Body of pancreas (tissue), 4 donors: ENCODE measurements at regions of chr9 and their contacts with region 1.

Region 1: GRCh38 chr9:17635115-17635890 is 56.4 kb downstream of the SH3GL2 start:
- DNase-seq: no peak
- ATAC-seq: no peak
- H3K4me3 ChIP-seq: no peak overlapping the region
- H3K27ac ChIP-seq: no peak overlapping the region
- H3K4me1 ChIP-seq: no peaks in the 10 kb centered on the region
- H3K27me3 ChIP-seq: no peaks in the 10 kb centered on the region
- CTCF ChIP-seq: no peak
- POLR2A ChIP-seq: no peak

Region 2: GRCh38 chr9:17414986-17415385 is 220.3 kb before region 1 on chr9:
- intact Hi-C with region 1: no loop called
- DNase-seq: no peak
- ATAC-seq: no peak
- H3K4me3 ChIP-seq: no peak overlapping the region
- H3K27ac ChIP-seq: no peak overlapping the region
- H3K4me1 ChIP-seq: no peaks in the 10 kb centered on the region
- H3K27me3 ChIP-seq: no peaks in the 10 kb centered on the region
- CTCF ChIP-seq: no peak
- POLR2A ChIP-seq: no peak

Region 3: DNA sequence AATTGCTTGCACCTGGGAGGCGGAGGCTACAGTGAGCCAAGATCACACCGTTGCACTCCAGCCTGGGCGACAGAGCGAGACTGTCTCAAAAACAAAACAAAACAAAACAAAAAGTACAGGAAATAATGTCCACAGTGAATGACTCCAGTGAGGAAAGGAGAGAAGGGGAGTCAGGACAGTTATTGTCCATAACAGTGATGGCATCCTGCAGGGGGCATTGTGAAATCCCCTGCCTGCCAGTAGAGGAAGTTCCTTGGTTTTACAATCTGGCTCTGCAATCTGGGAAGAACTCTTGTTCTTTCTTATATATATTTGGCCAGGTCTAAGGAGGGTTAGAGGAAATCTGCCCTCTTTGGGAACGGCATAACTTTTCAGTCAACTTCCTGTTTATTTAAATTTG is 48.2 kb before region 1 on chr9:
- intact Hi-C with region 1: loop called (anchors 10 kb)
- DNase-seq: no peak
- ATAC-seq: no peak
- H3K4me3 ChIP-seq: no peak overlapping the region
- H3K27ac ChIP-seq: no peak overlapping the region
- H3K4me1 ChIP-seq: no peaks in the 10 kb centered on the region
- H3K27me3 ChIP-seq: no peaks in the 10 kb centered on the region
- CTCF ChIP-seq: no peak
- POLR2A ChIP-seq: no peak